ENCODE measurements at regions of chr20 and their contacts with region 1.

Region 1: DNA sequence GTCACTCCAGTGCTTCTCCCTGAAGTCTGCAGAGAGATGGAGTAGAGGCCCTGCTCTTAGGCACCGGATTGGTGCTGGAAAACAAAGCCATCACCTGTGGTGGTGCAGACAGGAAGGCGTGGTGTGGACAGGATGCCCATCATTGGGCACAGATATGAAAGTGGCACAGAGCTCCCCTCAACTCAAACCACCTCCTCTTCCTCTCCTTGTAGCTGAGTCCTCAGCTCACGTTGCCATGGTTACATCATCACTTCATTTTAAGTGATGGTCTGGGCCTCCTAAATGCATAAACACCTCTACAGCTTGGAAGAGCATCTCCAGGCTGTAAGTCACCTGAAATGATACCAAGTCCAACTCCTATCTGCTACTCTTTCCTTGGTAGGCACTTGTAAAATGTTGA is 8.0 kb upstream of the RTF2 start:
- DNase-seq: peak; percentile 85
- H3K4me3 Mint-ChIP-seq: no peak overlapping the region
- H3K27ac Mint-ChIP-seq: peak overlapping the region; percentile 60
- H3K4me1 Mint-ChIP-seq: peaks cover 40% of the 10 kb centered on the region
- H3K27me3 Mint-ChIP-seq: no peaks in the 10 kb centered on the region

Region 2: DNA sequence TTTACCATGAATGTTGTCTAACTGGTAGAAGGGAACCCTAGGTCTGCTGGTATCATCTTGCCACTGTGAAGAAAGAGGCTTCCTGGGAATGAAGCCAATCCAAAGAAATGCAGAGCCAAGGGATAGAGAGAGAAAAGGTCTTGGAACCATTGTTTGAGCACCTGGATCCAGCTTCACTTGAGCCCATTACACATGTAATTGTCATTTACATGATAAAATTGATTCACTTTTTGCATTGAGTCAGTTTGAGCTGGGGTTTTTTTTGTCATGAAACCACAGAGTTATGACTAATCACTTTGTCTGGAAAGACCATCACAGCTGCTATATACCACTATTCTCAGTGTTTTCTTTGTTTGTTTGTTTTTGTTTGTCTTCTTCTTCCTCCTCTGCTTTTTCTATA is 567.4 kb before region 1 on chr20:
- intact Hi-C with region 1: no loop called
- DNase-seq: no peak
- H3K4me3 Mint-ChIP-seq: no peak overlapping the region
- H3K27ac Mint-ChIP-seq: no peak overlapping the region
- H3K4me1 Mint-ChIP-seq: no peaks in the 10 kb centered on the region
- H3K27me3 Mint-ChIP-seq: no peaks in the 10 kb centered on the region

Region 3: GRCh38 chr20:56439771-56440291 is 20.6 kb before region 1 on chr20:
- intact Hi-C with region 1: loop called (anchors 2 kb)
- DNase-seq: peak; percentile 69
- H3K4me3 Mint-ChIP-seq: peak overlapping the region; percentile 76
- H3K27ac Mint-ChIP-seq: peak overlapping the region; percentile 93
- H3K4me1 Mint-ChIP-seq: peaks cover 38% of the 10 kb centered on the region
- H3K27me3 Mint-ChIP-seq: no peaks in the 10 kb centered on the region

Region 4: GRCh38 chr20:56554869-56555268 is 94.4 kb after region 1 on chr20:
- intact Hi-C with region 1: no loop called
- DNase-seq: peak; percentile 57
- H3K4me3 Mint-ChIP-seq: no peak overlapping the region
- H3K27ac Mint-ChIP-seq: peak overlapping the region; percentile 45
- H3K4me1 Mint-ChIP-seq: peaks cover 8% of the 10 kb centered on the region
- H3K27me3 Mint-ChIP-seq: peaks cover 3% of the 10 kb centered on the region